ENCODE measurements at regions of chr19 and their contacts with region 1.

Region 1: GRCh38 chr19:42108527-42109389 is 23.5 kb downstream of the POU2F2 start:
- DNase-seq: peak; percentile 97
- H3K4me3 Mint-ChIP-seq: no peak overlapping the region
- H3K27ac Mint-ChIP-seq: peak overlapping the region; percentile 44
- H3K4me1 Mint-ChIP-seq: peaks cover 55% of the 10 kb centered on the region
- H3K27me3 Mint-ChIP-seq: no peaks in the 10 kb centered on the region

Region 2: DNA sequence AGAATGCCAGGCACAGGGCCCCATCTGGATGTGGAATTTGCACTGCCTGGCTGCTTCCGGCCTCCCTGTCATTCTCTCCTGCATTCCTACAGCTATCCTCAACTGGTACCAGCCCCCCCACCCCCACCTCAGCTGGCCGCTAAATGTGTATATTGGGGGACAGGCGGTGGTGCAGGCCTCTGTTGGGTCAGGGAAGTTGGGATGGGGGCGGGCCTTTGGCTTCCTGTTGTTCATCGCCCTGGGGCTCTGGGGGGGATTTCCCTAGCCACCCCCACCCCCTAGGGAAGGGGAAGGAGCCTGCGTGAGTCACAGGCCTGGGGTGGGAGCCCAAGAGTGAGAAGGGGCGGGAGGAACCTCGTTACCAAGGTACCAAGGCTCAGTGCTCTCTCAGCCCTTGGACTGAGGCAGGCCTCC is 12.9 kb after region 1 on chr19:
- CTCF ChIA-PET with region 1: interaction called, 86 read pairs
- intact Hi-C with region 1: loop called (anchors 1 kb)
- DNase-seq: peak; percentile 97
- H3K4me3 Mint-ChIP-seq: peak overlapping the region; percentile 76
- H3K27ac Mint-ChIP-seq: peak overlapping the region; percentile 98
- H3K4me1 Mint-ChIP-seq: peaks cover 54% of the 10 kb centered on the region
- H3K27me3 Mint-ChIP-seq: no peaks in the 10 kb centered on the region

Region 3: GRCh38 chr19:42176990-42177685 is 68.4 kb after region 1 on chr19:
- CTCF ChIA-PET with region 1: interaction called, 12 read pairs
- intact Hi-C with region 1: loop called (anchors 1 kb)
- DNase-seq: peak; percentile 83
- H3K4me3 Mint-ChIP-seq: no peak overlapping the region
- H3K27ac Mint-ChIP-seq: no peak overlapping the region
- H3K4me1 Mint-ChIP-seq: peaks cover 11% of the 10 kb centered on the region
- H3K27me3 Mint-ChIP-seq: peaks cover 26% of the 10 kb centered on the region

Region 4: DNA sequence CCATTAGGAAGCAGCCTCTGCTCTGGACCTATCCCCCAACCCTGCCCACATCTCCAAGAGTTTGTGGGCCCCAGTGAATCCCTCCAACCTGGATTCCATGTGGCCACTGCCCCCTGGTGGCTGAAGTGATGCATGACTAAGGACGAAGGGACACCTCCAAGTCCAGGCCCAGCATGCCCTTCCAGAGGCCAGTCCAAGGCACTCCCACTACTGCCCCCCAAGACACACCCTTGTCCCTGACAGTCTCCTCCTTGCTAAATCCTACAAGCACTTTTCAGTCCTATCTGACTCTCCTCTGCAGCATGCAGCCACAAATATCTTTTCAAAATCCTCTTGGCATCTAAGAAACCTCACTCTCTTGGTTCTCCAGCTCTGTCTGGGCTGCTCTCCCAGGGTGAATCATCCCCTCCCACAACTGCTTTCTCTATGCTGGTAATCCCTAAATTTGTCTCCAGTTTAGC is 75.7 kb after region 1 on chr19:
- CTCF ChIA-PET with region 1: interaction called, 70 read pairs
- intact Hi-C with region 1: loop called (anchors 1 kb)
- DNase-seq: peak; percentile 86
- H3K4me3 Mint-ChIP-seq: no peak overlapping the region
- H3K27ac Mint-ChIP-seq: no peak overlapping the region
- H3K4me1 Mint-ChIP-seq: peaks cover 20% of the 10 kb centered on the region
- H3K27me3 Mint-ChIP-seq: peaks cover 6% of the 10 kb centered on the region

Region 5: GRCh38 chr19:42401365-42402303 is 292.9 kb after region 1 on chr19:
- CTCF ChIA-PET with region 1: no interaction called
- intact Hi-C with region 1: loop called (anchors 5 kb)
- DNase-seq: peak; percentile 82
- H3K4me3 Mint-ChIP-seq: peak overlapping the region; percentile 71
- H3K27ac Mint-ChIP-seq: no peak overlapping the region
- H3K4me1 Mint-ChIP-seq: peaks cover 33% of the 10 kb centered on the region
- H3K27me3 Mint-ChIP-seq: no peaks in the 10 kb centered on the region

Region 6: DNA sequence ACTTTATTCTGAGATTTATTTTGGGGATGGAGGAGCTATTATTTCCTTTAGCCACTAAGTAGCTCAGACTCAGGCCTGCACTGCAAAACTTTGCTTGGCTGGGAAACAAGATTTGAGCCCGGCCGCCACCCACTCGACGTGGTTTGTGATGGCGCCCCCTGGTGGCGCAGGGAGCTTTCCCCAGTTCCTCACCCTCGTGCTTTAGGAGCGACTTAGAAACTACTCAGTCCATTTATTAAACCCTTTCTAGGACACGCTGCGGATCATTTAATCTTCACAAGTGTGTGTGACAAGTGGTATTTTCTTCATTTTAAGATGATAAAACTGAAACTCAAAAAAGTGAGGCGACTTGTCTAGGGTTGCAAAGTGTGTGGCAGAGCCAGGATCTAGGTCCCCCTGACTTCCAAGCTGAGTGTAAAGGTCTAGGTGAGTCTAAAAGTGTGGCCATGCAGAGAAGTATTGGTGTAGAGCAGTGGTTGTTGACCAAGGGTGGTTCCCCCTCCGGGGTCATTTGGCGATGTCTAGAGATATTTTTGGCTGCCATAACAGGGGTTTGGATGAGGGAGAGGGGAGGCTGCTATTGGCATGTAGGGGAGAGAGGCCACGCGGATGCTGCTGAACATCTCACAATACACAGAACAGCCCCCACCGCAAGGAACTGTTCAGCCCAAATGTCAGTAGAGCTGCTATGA is 331.7 kb after region 1 on chr19:
- CTCF ChIA-PET with region 1: interaction called, 5 read pairs
- intact Hi-C with region 1: loop called (anchors 2 kb)
- DNase-seq: peak; percentile 88
- H3K4me3 Mint-ChIP-seq: peak overlapping the region; percentile 3
- H3K27ac Mint-ChIP-seq: no peak overlapping the region
- H3K4me1 Mint-ChIP-seq: peaks cover 14% of the 10 kb centered on the region
- H3K27me3 Mint-ChIP-seq: no peaks in the 10 kb centered on the region

Measured in activated naive CD4-positive, alpha-beta T cell treated with anti-CD3 and anti-CD28 coated beads for 36 hours (primary cell).